ENCODE measurements at regions of chr6 and their contacts with region 1.

Region 1: DNA sequence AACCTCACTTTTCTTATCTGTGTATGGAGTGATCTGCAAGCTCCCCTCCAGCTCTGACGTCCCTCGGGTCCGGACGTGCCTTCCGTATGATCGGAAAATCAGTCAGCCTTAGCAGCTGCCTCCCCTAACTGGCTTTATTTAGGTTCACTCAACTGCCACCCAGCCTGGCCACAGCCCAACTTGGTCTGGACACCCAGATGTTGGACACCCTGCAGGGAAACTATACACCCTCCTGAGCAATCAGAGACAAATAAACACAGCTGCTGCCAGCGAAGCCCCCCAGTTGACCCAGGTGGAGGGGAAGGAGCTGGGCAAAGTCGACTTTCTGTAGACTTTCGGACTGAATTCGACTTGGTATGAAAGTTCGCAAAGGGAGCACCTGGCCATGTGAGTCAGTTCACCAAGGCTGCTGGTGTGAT is 28.9 kb downstream of the TBC1D7 start:
- H3K4me3 ChIP-seq: no peak overlapping the region
- H3K27ac ChIP-seq: no peak overlapping the region
- H3K4me1 ChIP-seq: peaks cover 6% of the 10 kb centered on the region
- CTCF ChIP-seq: no peak

Region 2: GRCh38 chr6:13277836-13278563 is 21.4 kb before region 1 on chr6:
- CTCF ChIA-PET with region 1: interaction called, 11 read pairs
- POLR2A ChIA-PET with region 1: no interaction called
- H3K4me3 ChIP-seq: no peak overlapping the region
- H3K27ac ChIP-seq: no peak overlapping the region
- H3K4me1 ChIP-seq: no peaks in the 10 kb centered on the region
- CTCF ChIP-seq: peak; percentile 60